PC-9 (cell line): ENCODE measurements at regions of chr12 and their contacts with region 1.

Region 1: DNA sequence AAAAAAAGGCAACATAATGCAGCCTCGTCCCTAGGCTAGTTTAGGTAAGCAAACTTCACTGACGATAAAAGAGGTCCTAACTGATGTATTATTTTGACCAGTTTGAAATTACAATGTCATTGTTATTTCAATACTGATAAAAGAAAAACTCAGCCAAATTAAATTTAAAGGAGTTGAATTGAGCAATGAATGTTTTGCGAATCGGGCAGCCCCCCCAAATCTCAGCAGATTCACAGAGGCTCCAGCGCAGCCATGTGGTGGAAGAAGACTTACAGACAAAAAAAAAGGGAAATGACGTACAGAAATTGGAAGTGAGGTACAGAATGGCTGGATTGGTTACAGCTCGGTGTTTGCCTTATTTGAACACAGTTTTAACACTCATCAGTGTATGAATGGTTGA is 8.2 kb upstream of the LDHB start:
- DNase-seq: no peak
- H3K4me3 ChIP-seq: no peak overlapping the region
- H3K27ac ChIP-seq: no peak overlapping the region
- H3K4me1 ChIP-seq: no peaks in the 10 kb centered on the region
- H3K27me3 ChIP-seq: peaks cover 8% of the 10 kb centered on the region; the same call in 1 of the 2 replicates
- CTCF ChIP-seq: no peak

Region 2: GRCh38 chr12:21650833-21651396 is 14.9 kb before region 1 on chr12:
- CTCF ChIA-PET with region 1: interaction called, 14 read pairs
- POLR2A ChIA-PET with region 1: no interaction called
- intact Hi-C with region 1: no loop called
- DNase-seq: no peak
- H3K4me3 ChIP-seq: no peak overlapping the region
- H3K27ac ChIP-seq: no peak overlapping the region
- H3K4me1 ChIP-seq: peaks cover 15% of the 10 kb centered on the region
- H3K27me3 ChIP-seq: no peaks in the 10 kb centered on the region
- CTCF ChIP-seq: no peak